MCF 10A (cell line): ENCODE measurements at regions of chr5 and their contacts with region 1.

Region 1: GRCh38 chr5:165410476-165410875 is 1905.1 kb downstream of the MAT2B start:
- DNase-seq: peak; percentile 40
- H3K4me3 Mint-ChIP-seq: no peak overlapping the region
- H3K27ac Mint-ChIP-seq: no peak overlapping the region
- H3K4me1 Mint-ChIP-seq: no peaks in the 10 kb centered on the region
- H3K27me3 Mint-ChIP-seq: no peaks in the 10 kb centered on the region
- CTCF ChIP-seq: no peak

Region 2: DNA sequence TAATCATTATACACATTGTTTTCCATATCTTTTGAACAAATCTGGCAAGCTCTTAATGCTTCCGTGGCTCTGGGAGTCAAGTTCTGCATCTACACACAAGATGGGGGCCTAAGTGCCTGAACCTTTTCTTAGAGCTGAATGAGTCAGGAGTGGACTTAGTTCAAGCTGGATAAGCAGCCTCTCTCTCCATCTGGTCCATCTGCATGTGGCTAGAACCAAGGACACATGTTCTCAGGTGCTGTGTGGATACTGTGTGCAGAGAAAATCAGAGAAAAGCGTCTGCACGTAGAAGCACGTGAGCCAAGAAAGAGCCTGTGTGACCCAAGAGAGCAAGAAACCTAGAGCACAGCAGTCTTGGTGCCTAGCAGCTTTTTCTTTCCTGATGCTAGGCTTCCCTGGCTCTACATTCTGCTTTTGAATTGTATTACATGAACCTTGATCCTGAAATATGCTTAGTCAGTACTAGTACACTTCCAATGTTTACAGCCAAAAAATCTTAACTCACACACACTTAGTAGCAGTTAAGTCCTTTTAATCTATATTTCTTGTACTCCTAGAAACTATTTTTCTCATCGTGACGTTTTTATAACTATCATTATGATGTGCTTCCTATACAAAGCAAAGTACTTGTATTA is 106.2 kb before region 1 on chr5:
- CTCF ChIA-PET with region 1: no interaction called
- POLR2A ChIA-PET with region 1: no interaction called
- intact Hi-C with region 1: no loop called
- DNase-seq: no peak
- H3K4me3 Mint-ChIP-seq: no peak overlapping the region
- H3K27ac Mint-ChIP-seq: no peak overlapping the region
- H3K4me1 Mint-ChIP-seq: peaks cover 2% of the 10 kb centered on the region
- H3K27me3 Mint-ChIP-seq: no peaks in the 10 kb centered on the region
- CTCF ChIP-seq: no peak

Region 3: DNA sequence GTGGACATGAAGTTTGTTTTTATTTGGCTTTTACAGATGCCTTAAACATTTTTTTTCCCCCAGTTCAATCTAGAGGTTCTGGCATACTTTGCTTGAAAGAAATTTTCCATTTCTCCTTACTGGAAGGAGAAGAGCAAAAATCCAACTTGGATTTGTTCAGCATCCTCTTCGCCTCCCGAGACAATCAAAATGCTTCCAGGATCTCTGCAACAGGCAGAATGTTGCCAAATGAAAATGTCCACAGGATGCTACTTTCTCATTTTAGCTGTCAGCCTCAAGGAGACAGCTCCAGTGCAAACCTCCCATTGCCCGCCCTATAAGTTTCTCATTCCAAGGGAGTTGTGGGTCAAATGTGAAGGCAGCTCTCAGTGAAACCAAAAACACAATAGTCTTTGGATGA is 67.1 kb after region 1 on chr5:
- CTCF ChIA-PET with region 1: no interaction called
- POLR2A ChIA-PET with region 1: no interaction called
- intact Hi-C with region 1: loop called (anchors 2 kb)
- DNase-seq: no peak
- H3K4me3 Mint-ChIP-seq: no peak overlapping the region
- H3K27ac Mint-ChIP-seq: no peak overlapping the region
- H3K4me1 Mint-ChIP-seq: no peaks in the 10 kb centered on the region
- H3K27me3 Mint-ChIP-seq: no peaks in the 10 kb centered on the region
- CTCF ChIP-seq: no peak